ENCODE measurements at regions of chr12 and their contacts with region 1.

Region 1: GRCh38 chr12:56158029-56158925 is at the start of gene MYL6:
- DNase-seq: peak; percentile 96
- H3K4me3 ChIP-seq: peak within 1 kb of the TSS; percentile 78 to 98 (median 91)
- H3K27ac ChIP-seq: peak within 1 kb of the TSS; percentile 87
- H3K4me1 ChIP-seq: peaks cover 25% of the 10 kb centered on the region
- H3K27me3 ChIP-seq: no peaks in the 10 kb centered on the region
- CTCF ChIP-seq: no peak
- POLR2A ChIP-seq: peak; percentile 99
- total RNA-seq, gene MYL6: 2,364 and 2,543 TPM in 2 replicates

Region 2: DNA sequence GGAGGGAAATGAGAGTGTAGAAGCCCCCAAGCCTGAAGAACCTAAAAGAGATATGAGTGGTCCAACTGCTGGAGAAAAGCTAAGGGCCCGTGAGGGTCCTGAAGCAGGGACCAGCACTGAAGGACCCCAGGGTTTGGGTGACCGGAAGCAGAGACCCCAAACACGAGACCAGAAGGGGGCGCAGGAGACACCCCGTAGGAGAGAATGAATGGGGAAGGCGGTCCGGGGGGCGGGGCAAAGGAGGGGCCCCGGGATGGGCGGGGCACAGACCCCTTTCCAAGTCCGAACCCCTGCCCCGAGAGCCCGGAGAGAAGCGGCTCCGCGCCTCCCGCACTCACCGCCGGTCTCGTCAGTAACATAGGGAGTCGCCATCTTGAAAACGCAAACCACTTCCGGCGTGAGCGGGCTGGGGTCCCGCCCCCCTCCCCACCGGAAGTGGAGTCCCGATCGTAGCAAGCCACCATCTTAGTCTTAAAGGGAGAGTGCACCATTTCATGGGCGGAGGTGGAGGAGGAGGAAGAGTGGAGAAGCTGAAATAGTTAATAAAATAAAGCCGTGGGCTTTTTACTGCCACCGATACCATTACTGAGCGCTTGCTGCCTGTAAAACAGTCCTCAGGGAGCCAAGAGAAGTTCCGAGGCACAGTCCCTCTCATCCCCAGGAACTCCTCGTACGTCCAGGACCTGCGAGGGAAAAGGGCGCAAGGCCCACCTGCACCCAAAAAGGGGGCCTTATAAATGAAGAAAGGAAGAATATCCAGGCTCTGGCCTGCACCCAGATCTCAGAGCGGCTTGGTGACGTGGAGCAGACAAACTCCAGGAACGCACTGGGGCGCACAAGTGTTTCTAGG is 231.3 kb before region 1 on chr12:
- CTCF ChIA-PET with region 1: no interaction called
- POLR2A ChIA-PET with region 1: no interaction called
- dilution Hi-C with region 1: no loop called
- intact Hi-C with region 1: no loop called
- DNase-seq: peak; percentile 95
- H3K4me3 ChIP-seq: peak overlapping the region; percentile 55 to 98 (median 81)
- H3K27ac ChIP-seq: peak overlapping the region; percentile 40
- H3K4me1 ChIP-seq: peaks cover 28% of the 10 kb centered on the region
- H3K27me3 ChIP-seq: no peaks in the 10 kb centered on the region
- CTCF ChIP-seq: peak; percentile 69 to 74
- POLR2A ChIP-seq: peak; percentile 58

Region 3: GRCh38 chr12:56143870-56144269 is 14.4 kb before region 1 on chr12:
- CTCF ChIA-PET with region 1: interaction called, 4 read pairs
- POLR2A ChIA-PET with region 1: interaction called, 15 read pairs
- dilution Hi-C with region 1: no loop called
- intact Hi-C with region 1: loop called (anchors 1 kb)
- DNase-seq: peak; percentile 66
- H3K4me3 ChIP-seq: no peak overlapping the region
- H3K27ac ChIP-seq: peak overlapping the region; percentile 27
- H3K4me1 ChIP-seq: peaks cover 29% of the 10 kb centered on the region
- H3K27me3 ChIP-seq: no peaks in the 10 kb centered on the region
- CTCF ChIP-seq: no peak
- POLR2A ChIP-seq: no peak

Region 4: GRCh38 chr12:58095002-58095401 is 1936.7 kb after region 1 on chr12:
- CTCF ChIA-PET with region 1: no interaction called
- POLR2A ChIA-PET with region 1: no interaction called
- dilution Hi-C with region 1: no loop called
- intact Hi-C with region 1: no loop called
- DNase-seq: no peak
- H3K4me3 ChIP-seq: no peak overlapping the region
- H3K27ac ChIP-seq: no peak overlapping the region
- H3K4me1 ChIP-seq: no peaks in the 10 kb centered on the region
- H3K27me3 ChIP-seq: no peaks in the 10 kb centered on the region
- CTCF ChIP-seq: no peak
- POLR2A ChIP-seq: no peak

Measured in endothelial cell of umbilical vein (primary cell).